HepG2 (cell line): ENCODE measurements at regions of chr13 and their contacts with region 1.

Region 1: GRCh38 chr13:49792550-49793324 is at the start of gene KPNA3:
- DNase-seq: peak; percentile 89
- ATAC-seq: peak; percentile 95
- H3K4me3 ChIP-seq: peak within 1 kb of the TSS; percentile 72 to 81 (median 80)
- H3K27ac ChIP-seq: peak within 1 kb of the TSS; percentile 96
- H3K4me1 ChIP-seq: peaks cover 41% of the 10 kb centered on the region
- H3K27me3 ChIP-seq: no peaks in the 10 kb centered on the region; a peak in 1 of 5 replicates
- CTCF ChIP-seq: peak; percentile 64
- EP300 ChIP-seq: no peak
- POLR2A ChIP-seq: peak; percentile 87 to 92
- RAD21 ChIP-seq: peak; percentile 63
- total RNA-seq, gene KPNA3: 28.9 and 69.8 TPM in 2 replicates

Region 2: DNA sequence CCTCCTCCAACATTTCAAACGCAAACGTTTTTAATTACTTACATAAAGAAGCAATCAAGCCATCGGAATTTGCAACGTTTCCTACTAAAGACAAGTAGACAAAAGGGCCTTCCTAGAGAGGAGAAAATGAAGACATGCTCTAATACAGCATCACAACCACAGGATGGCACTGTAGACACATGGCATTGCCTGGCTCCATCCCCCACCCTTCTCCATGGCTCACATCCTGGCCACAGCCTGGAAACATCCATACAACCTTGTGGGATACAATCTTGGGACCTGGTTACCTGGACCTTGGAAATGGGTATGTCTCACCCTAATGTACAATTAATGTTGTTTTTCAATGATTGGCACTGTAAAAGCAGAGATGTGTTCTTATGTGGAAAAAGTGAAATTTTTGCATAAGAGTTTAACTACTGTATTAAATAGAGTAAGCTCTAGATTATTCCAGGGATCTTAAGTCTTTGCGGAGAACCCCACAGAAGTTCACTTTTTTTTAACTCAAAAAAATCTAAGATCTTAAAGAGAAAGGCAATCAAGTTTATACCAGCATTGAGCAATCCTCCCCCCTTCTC is 122.9 kb before region 1 on chr13:
- CTCF ChIA-PET with region 1: no interaction called
- POLR2A ChIA-PET with region 1: interaction called, 7 read pairs
- in situ Hi-C with region 1: no loop called
- intact Hi-C with region 1: loop called (anchors 2 kb)
- DNase-seq: peak; percentile 60
- ATAC-seq: peak; percentile 96
- H3K4me3 ChIP-seq: no peak overlapping the region
- H3K27ac ChIP-seq: no peak overlapping the region
- H3K4me1 ChIP-seq: no peaks in the 10 kb centered on the region
- H3K27me3 ChIP-seq: no peaks in the 10 kb centered on the region
- CTCF ChIP-seq: peak; percentile 81
- EP300 ChIP-seq: no peak
- POLR2A ChIP-seq: no peak
- RAD21 ChIP-seq: peak; percentile 84

Region 3: GRCh38 chr13:49690992-49691886 is 101.5 kb before region 1 on chr13 and contains the start of gene EBPL:
- CTCF ChIA-PET with region 1: no interaction called
- POLR2A ChIA-PET with region 1: interaction called, 43 read pairs
- in situ Hi-C with region 1: no loop called
- intact Hi-C with region 1: loop called (anchors 5 kb)
- DNase-seq: peak; percentile 86
- ATAC-seq: peak; percentile 95
- H3K4me3 ChIP-seq: peak within 1 kb of the TSS; percentile 64 to 79 (median 79)
- H3K27ac ChIP-seq: peak within 1 kb of the TSS; percentile 86
- H3K4me1 ChIP-seq: peaks cover 39% of the 10 kb centered on the region
- H3K27me3 ChIP-seq: no peaks in the 10 kb centered on the region; a peak in 1 of 5 replicates
- CTCF ChIP-seq: no peak; the same call in 1 of the 2 replicates
- EP300 ChIP-seq: 0 out of 4 replicates have a peak, but pooled peaks of 1 of the 2 experiments have one; percentile 8
- POLR2A ChIP-seq: peak; percentile 80 to 88
- RAD21 ChIP-seq: peak; percentile 12; the same call in 1 of the 2 replicates
- total RNA-seq, gene EBPL: 51.8 and 96.5 TPM in 2 replicates

Region 4: GRCh38 chr13:49810567-49811526 is 18.1 kb after region 1 on chr13:
- CTCF ChIA-PET with region 1: no interaction called
- POLR2A ChIA-PET with region 1: interaction called, 193 read pairs
- in situ Hi-C with region 1: no loop called
- intact Hi-C with region 1: loop called (anchors 1 kb)
- DNase-seq: peak; percentile 93
- ATAC-seq: peak; percentile 83
- H3K4me3 ChIP-seq: peak overlapping the region; percentile 6 to 49 (median 39); a peak in 4 of 6 replicates
- H3K27ac ChIP-seq: peak overlapping the region; percentile 92
- H3K4me1 ChIP-seq: peaks cover 100% of the 10 kb centered on the region
- H3K27me3 ChIP-seq: no peaks in the 10 kb centered on the region
- CTCF ChIP-seq: no peak
- EP300 ChIP-seq: peak in 1 of 2 experiments; percentile 86; a peak in 2 of 4 replicates
- POLR2A ChIP-seq: no peak
- RAD21 ChIP-seq: no peak

Region 5: DNA sequence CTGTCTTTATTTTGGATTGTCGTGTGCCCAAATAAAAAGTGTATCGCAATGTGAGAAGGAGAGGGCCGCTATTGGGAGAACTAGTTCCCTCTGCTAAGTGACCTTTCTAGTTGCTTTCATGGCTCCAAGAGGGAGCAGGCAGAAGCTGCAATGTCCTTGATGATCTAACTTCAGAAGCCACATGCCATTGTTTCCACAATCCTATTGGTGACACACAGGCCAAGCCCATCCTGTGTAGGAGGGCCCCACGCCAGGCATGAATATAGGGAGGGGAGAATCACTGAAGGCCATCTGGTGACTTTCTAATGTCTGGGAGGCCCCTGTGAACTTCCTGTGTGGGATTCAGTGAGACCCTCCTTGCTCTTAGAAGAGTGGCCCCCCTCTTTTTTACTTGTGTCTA is 47.5 kb after region 1 on chr13:
- CTCF ChIA-PET with region 1: no interaction called
- POLR2A ChIA-PET with region 1: interaction called, 14 read pairs
- in situ Hi-C with region 1: loop called (anchors 5 kb)
- intact Hi-C with region 1: no loop called
- DNase-seq: peak; percentile 61
- ATAC-seq: peak; percentile 32; the same call in 2 of the 3 replicates
- H3K4me3 ChIP-seq: no peak overlapping the region
- H3K27ac ChIP-seq: no peak overlapping the region
- H3K4me1 ChIP-seq: peaks cover 51% of the 10 kb centered on the region
- H3K27me3 ChIP-seq: no peaks in the 10 kb centered on the region
- CTCF ChIP-seq: no peak
- EP300 ChIP-seq: no peak
- POLR2A ChIP-seq: no peak
- RAD21 ChIP-seq: no peak